Mammary epithelial cell (primary cell): ENCODE measurements at regions of chr4 and their contacts with region 1.

Region 1: DNA sequence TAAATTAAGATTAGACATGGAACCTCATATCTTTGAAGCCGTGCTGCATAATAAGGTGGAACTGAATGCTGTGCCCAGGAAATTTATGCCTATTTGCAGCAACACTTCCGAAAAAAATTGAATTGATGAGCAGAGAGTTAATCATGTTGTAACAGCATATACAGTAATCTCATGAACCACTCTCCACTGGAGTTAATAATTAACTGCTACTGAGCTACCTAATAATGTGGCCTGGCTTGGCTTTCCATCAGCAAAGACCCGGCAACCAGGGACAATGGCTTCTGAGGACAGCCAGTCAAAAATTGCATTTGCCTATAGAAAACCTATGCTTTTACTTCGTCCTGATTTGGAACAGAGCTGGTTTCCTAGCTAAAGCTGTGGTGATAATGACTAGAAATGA is 63.8 kb upstream of the GATB start:
- DNase-seq: no peak
- H3K4me3 ChIP-seq: no peak overlapping the region
- H3K27ac ChIP-seq: no peak overlapping the region
- H3K4me1 ChIP-seq: no peaks in the 10 kb centered on the region
- H3K27me3 ChIP-seq: no peaks in the 10 kb centered on the region
- CTCF ChIP-seq: no peak

Region 2: GRCh38 chr4:151784706-151785105 is 40.0 kb before region 1 on chr4:
- CTCF ChIA-PET with region 1: no interaction called
- dilution Hi-C with region 1: loop called (anchors 5 kb)
- in situ Hi-C with region 1: no loop called
- intact Hi-C with region 1: no loop called
- DNase-seq: no peak
- H3K4me3 ChIP-seq: no peak overlapping the region
- H3K27ac ChIP-seq: no peak overlapping the region
- H3K4me1 ChIP-seq: no peaks in the 10 kb centered on the region
- H3K27me3 ChIP-seq: no peaks in the 10 kb centered on the region
- CTCF ChIP-seq: no peak

Region 3: DNA sequence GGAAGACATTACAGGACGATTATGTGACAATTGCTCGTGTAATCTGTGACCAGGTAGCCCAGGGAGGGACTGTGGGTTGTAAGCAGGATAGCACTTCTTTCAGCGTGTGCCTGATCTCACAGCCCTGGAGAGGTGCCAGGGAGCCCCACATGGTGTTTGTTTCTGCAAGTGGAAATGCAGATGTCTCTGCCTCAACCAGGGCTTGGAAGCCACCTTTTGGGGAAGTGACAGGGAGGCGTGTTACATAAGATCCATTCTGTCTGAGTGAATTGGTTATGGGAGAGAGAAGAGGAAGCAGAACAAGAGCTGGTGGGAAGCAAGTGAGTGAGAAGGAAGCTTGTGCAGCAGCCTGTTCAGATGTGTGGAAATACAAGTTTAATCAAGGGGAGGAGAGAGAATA is 40.7 kb after region 1 on chr4:
- CTCF ChIA-PET with region 1: no interaction called
- dilution Hi-C with region 1: loop called (anchors 5 kb)
- in situ Hi-C with region 1: no loop called
- intact Hi-C with region 1: no loop called
- DNase-seq: no peak
- H3K4me3 ChIP-seq: no peak overlapping the region
- H3K27ac ChIP-seq: no peak overlapping the region
- H3K4me1 ChIP-seq: no peaks in the 10 kb centered on the region
- H3K27me3 ChIP-seq: peaks cover 6% of the 10 kb centered on the region
- CTCF ChIP-seq: no peak